ENCODE measurements at regions of chr19 and their contacts with region 1.

Region 1: DNA sequence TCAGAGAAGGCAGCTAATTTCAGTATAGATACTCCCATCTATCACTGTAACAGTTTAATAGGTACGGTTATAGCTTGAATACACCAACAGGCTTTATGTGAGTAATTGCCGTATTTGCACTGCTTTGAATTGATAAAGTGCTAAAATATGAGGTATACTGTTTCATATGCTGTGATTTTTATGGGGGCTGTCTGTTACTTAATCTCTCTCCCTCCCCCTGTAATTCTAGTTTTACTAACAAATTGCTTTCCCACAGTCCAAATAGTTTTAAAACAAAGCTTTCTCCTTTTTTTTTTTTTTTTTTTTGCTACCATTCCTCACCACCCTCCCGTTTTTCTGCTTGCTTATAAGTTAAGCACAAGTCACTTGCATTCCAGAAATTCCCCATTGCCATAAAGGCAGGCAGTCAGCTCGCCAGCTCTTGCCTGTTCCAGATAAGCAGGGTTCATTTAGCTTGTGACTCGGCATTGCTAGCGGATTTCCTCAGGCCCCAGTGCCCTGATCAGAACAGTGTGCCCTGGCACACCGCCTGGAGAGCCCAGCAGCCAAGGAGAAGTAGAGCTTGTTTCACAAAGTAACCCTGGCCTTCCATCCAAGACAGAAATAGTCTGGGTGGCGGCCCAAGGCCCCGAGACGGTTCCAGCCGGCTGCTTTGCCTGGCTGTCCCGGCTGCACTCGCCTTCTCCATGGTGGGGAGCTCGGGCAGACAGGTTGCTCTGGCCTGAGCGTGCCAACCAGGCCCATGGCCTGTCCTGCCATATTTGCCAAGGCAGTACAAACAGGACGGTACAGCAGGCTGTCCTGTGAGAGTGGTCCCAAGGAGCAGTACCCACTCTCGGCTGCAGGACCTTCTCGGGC is 43.5 kb upstream of the NPAS1 start:
- DNase-seq: peak; percentile 98
- H3K4me3 ChIP-seq: no peak overlapping the region
- H3K27ac ChIP-seq: peak overlapping the region; percentile 79
- H3K4me1 ChIP-seq: peaks cover 39% of the 10 kb centered on the region
- H3K27me3 ChIP-seq: no peaks in the 10 kb centered on the region
- CTCF ChIP-seq: no peak
- POLR2A ChIP-seq: no peak

Region 2: GRCh38 chr19:46849610-46850009 is 126.5 kb before region 1 on chr19:
- CTCF ChIA-PET with region 1: no interaction called
- POLR2A ChIA-PET with region 1: no interaction called
- dilution Hi-C with region 1: no loop called
- intact Hi-C with region 1: no loop called
- DNase-seq: peak; percentile 45
- H3K4me3 ChIP-seq: peak overlapping the region; percentile 71 to 97 (median 89)
- H3K27ac ChIP-seq: peak overlapping the region; percentile 73
- H3K4me1 ChIP-seq: peaks cover 10% of the 10 kb centered on the region
- H3K27me3 ChIP-seq: no peaks in the 10 kb centered on the region
- CTCF ChIP-seq: no peak
- POLR2A ChIP-seq: peak; percentile 6

Region 3: GRCh38 chr19:46878613-46879375 is 97.4 kb before region 1 on chr19:
- CTCF ChIA-PET with region 1: interaction called, 5 read pairs
- POLR2A ChIA-PET with region 1: interaction called, 12 read pairs
- dilution Hi-C with region 1: no loop called
- intact Hi-C with region 1: no loop called
- DNase-seq: peak; percentile 26
- H3K4me3 ChIP-seq: no peak overlapping the region
- H3K27ac ChIP-seq: peak overlapping the region; percentile 5
- H3K4me1 ChIP-seq: peaks cover 15% of the 10 kb centered on the region
- H3K27me3 ChIP-seq: no peaks in the 10 kb centered on the region
- CTCF ChIP-seq: no peak
- POLR2A ChIP-seq: no peak

Region 4: GRCh38 chr19:46924874-46925547 is 51.1 kb before region 1 on chr19:
- CTCF ChIA-PET with region 1: interaction called, 32 read pairs
- POLR2A ChIA-PET with region 1: no interaction called
- dilution Hi-C with region 1: no loop called
- intact Hi-C with region 1: no loop called
- DNase-seq: peak; percentile 74
- H3K4me3 ChIP-seq: no peak overlapping the region
- H3K27ac ChIP-seq: peak overlapping the region; percentile 73
- H3K4me1 ChIP-seq: peaks cover 25% of the 10 kb centered on the region
- H3K27me3 ChIP-seq: no peaks in the 10 kb centered on the region
- CTCF ChIP-seq: no peak
- POLR2A ChIP-seq: peak; percentile 20

Region 5: GRCh38 chr19:46932346-46932745 is 43.8 kb before region 1 on chr19:
- CTCF ChIA-PET with region 1: interaction called, 32 read pairs
- POLR2A ChIA-PET with region 1: no interaction called
- dilution Hi-C with region 1: no loop called
- intact Hi-C with region 1: loop called (anchors 5 kb)
- DNase-seq: peak; percentile 70
- H3K4me3 ChIP-seq: no peak overlapping the region
- H3K27ac ChIP-seq: peak overlapping the region; percentile 40
- H3K4me1 ChIP-seq: peaks cover 45% of the 10 kb centered on the region
- H3K27me3 ChIP-seq: no peaks in the 10 kb centered on the region
- CTCF ChIP-seq: no peak
- POLR2A ChIP-seq: no peak

Region 6: DNA sequence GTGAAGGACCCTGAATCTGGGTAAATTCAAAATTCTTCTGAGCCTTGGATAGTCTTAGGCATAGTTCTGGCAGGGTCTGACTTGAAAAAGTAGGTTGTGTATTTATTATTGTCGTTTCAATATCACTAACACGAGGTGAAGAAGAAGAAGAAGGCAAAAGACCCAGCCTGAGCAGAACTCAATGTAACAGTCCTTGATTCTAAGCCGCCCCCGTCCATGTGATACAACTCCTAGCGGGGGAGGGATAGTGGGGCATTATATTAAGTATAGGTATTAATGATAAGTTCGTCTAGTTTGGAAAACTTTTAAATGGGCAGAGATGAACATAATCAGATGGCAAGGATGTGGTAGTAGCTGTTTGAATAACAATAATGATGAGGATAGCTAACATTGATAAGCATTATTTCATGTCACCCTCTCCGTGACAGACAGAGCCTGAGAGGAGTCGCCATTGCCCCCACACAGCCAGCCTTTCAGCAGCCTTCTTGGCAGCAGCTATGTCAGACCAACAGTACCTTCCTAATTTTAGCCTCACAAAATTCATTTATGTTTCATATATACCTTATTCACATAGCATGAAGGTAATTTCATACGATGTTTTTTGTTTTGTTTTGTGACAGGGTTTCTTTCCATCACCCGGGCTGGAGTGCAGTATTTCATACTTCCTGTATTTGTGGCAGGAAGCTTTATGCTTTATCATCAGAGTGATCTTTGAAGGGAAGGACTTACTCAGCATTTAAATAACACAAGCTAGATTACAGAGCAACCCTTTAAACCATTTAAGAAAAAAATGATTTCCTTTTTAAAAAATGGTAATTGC is 21.0 kb before region 1 on chr19:
- CTCF ChIA-PET with region 1: interaction called, 21 read pairs
- POLR2A ChIA-PET with region 1: interaction called, 3 read pairs
- dilution Hi-C with region 1: no loop called
- intact Hi-C with region 1: loop called (anchors 2 kb)
- DNase-seq: peak; percentile 75
- H3K4me3 ChIP-seq: peak overlapping the region in 2 of 3 experiments; percentile 8 to 54
- H3K27ac ChIP-seq: peak overlapping the region; percentile 73
- H3K4me1 ChIP-seq: peaks cover 20% of the 10 kb centered on the region
- H3K27me3 ChIP-seq: no peaks in the 10 kb centered on the region
- CTCF ChIP-seq: no peak
- POLR2A ChIP-seq: no peak

Region 7: DNA sequence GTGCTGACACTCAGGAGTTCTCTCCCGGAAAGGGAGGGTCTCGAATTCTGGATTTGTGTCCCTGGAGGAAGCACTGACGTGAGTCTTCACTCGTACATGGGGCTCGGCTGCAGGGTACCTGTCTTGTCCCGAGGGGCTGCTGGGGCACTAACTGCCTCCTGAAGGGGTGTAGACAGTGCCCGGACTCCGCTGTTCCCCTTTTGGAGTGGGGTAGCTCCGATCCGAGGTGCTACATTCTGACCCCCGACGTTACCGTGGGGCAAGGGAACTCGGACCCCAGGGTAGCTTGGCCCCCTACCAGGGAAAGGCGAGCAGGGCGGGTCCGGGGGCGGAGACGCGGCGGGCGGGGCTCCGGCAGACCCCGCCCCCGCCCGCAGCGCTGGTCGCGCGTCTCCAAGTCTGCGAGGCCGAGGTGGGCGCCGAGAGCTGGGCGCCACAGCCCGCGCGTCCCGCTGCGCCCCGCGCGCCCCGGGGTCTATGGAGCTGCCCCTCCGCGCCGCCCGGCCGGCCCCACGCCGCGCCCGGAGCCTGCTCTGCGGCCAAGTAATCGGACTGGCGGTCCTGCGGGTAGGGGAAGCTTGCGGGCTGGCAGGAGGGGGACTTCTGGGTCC is 43.4 kb after region 1 on chr19 and contains the start of gene NPAS1:
- CTCF ChIA-PET with region 1: no interaction called
- POLR2A ChIA-PET with region 1: no interaction called
- dilution Hi-C with region 1: no loop called
- intact Hi-C with region 1: no loop called
- DNase-seq: no peak
- H3K4me3 ChIP-seq: no peak within 1 kb of the TSS
- H3K27ac ChIP-seq: no peak within 1 kb of the TSS
- H3K4me1 ChIP-seq: peaks cover 17% of the 10 kb centered on the region
- H3K27me3 ChIP-seq: peaks cover 36 to 48% of the 10 kb centered on the region in 2 experiments
- CTCF ChIP-seq: no peak
- POLR2A ChIP-seq: no peak
- total RNA-seq, gene NPAS1: 0.62 TPM in 1 of 2 replicates, not detected in the other